Naive thymus-derived CD4-positive, alpha-beta T cell (primary cell): ENCODE measurements at regions of chr19 and their contacts with region 1.

Region 1: GRCh38 chr19:58305065-58305931 is at the start of gene ERVK3-1:
- DNase-seq: peak; percentile 80 to 95 (median 93)
- ATAC-seq: peak; percentile 99
- H3K4me3 ChIP-seq: peak within 1 kb of the TSS; percentile 69
- H3K4me3 Mint-ChIP-seq: peak within 1 kb of the TSS; percentile 94 to 100 (median 98)
- H3K27ac ChIP-seq: peak within 1 kb of the TSS; percentile 91
- H3K27ac Mint-ChIP-seq: peak within 1 kb of the TSS; percentile 98 to 100 (median 99)
- H3K4me1 ChIP-seq: peaks cover 14 to 20% of the 10 kb centered on the region in 2 donors
- H3K4me1 Mint-ChIP-seq: peaks cover 33 to 64% (median 55%) of the 10 kb centered on the region in 7 donors
- H3K27me3 ChIP-seq: no peaks in the 10 kb centered on the region
- H3K27me3 Mint-ChIP-seq: no peaks in the 10 kb centered on the region
- total RNA-seq, gene ERVK3-1: 59.7 to 122 (median 65.4) TPM

Region 2: GRCh38 chr19:57410877-57411671 is 894.2 kb before region 1 on chr19 and contains the start of gene ZNF17:
- CTCF ChIA-PET with region 1: no interaction called
- POLR2A ChIA-PET with region 1: no interaction called
- intact Hi-C with region 1: loop called in 1 of 2 experiments (anchors 1 kb)
- DNase-seq: peak; percentile 72 to 95 (median 88)
- ATAC-seq: peak; percentile 100
- H3K4me3 ChIP-seq: peak within 1 kb of the TSS; percentile 80
- H3K4me3 Mint-ChIP-seq: peak within 1 kb of the TSS; percentile 85 to 97 (median 96)
- H3K27ac ChIP-seq: peak within 1 kb of the TSS; percentile 80
- H3K27ac Mint-ChIP-seq: peak within 1 kb of the TSS; percentile 78 to 96 (median 92)
- H3K4me1 ChIP-seq: peaks cover 3 to 8% of the 10 kb centered on the region in 2 donors
- H3K4me1 Mint-ChIP-seq: peaks cover 20 to 46% (median 34%) of the 10 kb centered on the region in 7 donors
- H3K27me3 ChIP-seq: no peaks in the 10 kb centered on the region
- H3K27me3 Mint-ChIP-seq: no peaks in the 10 kb centered on the region
- total RNA-seq, gene ZNF17: 9.3 to 27.8 (median 17.2) TPM

Region 3: GRCh38 chr19:58278157-58279041 is 26.9 kb before region 1 on chr19 and contains the start of gene ZNF8:
- CTCF ChIA-PET with region 1: no interaction called
- POLR2A ChIA-PET with region 1: interaction called, 21 read pairs
- intact Hi-C with region 1: loop called (anchors 1 kb)
- DNase-seq: peak; percentile 84 to 96 (median 93)
- ATAC-seq: peak; percentile 99
- H3K4me3 ChIP-seq: peak within 1 kb of the TSS; percentile 93
- H3K4me3 Mint-ChIP-seq: peak within 1 kb of the TSS; percentile 89 to 99 (median 95)
- H3K27ac ChIP-seq: peak within 1 kb of the TSS; percentile 80
- H3K27ac Mint-ChIP-seq: peak within 1 kb of the TSS; percentile 88 to 97 (median 96)
- H3K4me1 ChIP-seq: peaks cover 12 to 15% of the 10 kb centered on the region in 2 donors
- H3K4me1 Mint-ChIP-seq: peaks cover 28 to 63% (median 43%) of the 10 kb centered on the region in 7 donors
- H3K27me3 ChIP-seq: no peaks in the 10 kb centered on the region
- H3K27me3 Mint-ChIP-seq: no peaks in the 10 kb centered on the region
- total RNA-seq, gene ZNF8: 5.2 to 10.5 (median 10.0) TPM

Region 4: GRCh38 chr19:58380722-58381466 is 75.6 kb after region 1 on chr19 and contains the start of gene ZNF837:
- CTCF ChIA-PET with region 1: no interaction called
- POLR2A ChIA-PET with region 1: interaction called, 3 read pairs
- intact Hi-C with region 1: loop called (anchors 1 kb)
- DNase-seq: peak; percentile 90 to 100 (median 98)
- ATAC-seq: peak; percentile 93
- H3K4me3 ChIP-seq: peak within 1 kb of the TSS; percentile 97
- H3K4me3 Mint-ChIP-seq: peak within 1 kb of the TSS; percentile 87 to 98 (median 91)
- H3K27ac ChIP-seq: peak within 1 kb of the TSS; percentile 96
- H3K27ac Mint-ChIP-seq: peak within 1 kb of the TSS; percentile 93 to 97 (median 97)
- H3K4me1 ChIP-seq: peaks cover 21 to 25% of the 10 kb centered on the region in 2 donors
- H3K4me1 Mint-ChIP-seq: peaks cover 23 to 40% (median 34%) of the 10 kb centered on the region in 7 donors
- H3K27me3 ChIP-seq: no peaks in the 10 kb centered on the region
- H3K27me3 Mint-ChIP-seq: no peaks in the 10 kb centered on the region
- total RNA-seq, gene ZNF837: 1.4 to 4.3 (median 2.4) TPM

Region 5: DNA sequence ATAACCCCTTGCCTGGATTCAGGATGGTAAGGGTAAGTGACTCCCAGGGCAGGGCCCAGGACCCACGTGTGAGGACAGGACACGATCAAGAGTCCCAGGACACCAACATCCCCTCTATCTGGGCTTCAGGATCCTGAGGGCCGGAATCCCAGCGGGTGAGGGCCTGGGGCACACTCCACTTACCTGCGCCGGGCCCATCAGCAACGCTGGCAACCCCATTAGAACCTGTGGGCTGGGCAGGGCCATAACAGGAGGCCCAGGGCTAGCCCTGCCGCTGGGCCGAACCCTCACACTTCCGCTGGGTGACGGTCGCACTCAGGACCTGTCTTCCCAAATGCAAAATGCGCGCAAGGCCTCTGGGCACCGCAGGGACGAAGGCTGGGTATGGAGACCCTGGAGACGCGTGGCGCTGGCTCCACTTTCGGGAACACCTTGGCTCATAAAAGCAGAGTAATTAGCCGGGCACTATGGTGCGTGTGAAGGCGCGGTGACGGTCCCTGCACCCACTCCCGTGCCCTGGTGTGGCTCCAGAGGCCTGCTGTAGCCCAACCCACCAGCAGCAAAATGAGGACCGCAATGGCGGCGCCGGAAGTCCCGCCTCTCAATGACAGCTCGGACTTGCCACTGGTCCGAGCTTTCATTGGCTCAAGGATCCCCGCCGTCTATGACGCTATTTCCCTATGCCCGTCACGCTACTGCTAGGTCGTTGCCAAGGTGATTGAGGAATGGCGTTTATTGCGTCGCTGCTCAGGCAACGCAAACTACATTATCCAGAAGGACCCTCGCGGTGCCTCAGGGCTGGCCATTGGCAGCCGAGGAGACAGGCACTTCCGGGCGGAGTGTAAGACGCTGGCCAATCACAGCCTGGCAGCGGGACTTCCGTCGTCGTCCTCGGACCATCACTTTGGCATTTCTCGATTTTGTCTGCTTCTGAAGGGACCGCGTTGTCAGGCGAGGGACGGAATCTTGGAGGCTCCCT is 134.6 kb after region 1 on chr19 and contains the start of gene ZNF132:
- CTCF ChIA-PET with region 1: no interaction called
- POLR2A ChIA-PET with region 1: no interaction called
- intact Hi-C with region 1: loop called (anchors 1 kb)
- DNase-seq: peak; percentile 78 to 99 (median 95)
- ATAC-seq: peak; percentile 98
- H3K4me3 ChIP-seq: peak within 1 kb of the TSS; percentile 73
- H3K4me3 Mint-ChIP-seq: peak within 1 kb of the TSS; percentile 86 to 99 (median 96)
- H3K27ac ChIP-seq: peak within 1 kb of the TSS; percentile 81
- H3K27ac Mint-ChIP-seq: peak within 1 kb of the TSS; percentile 87 to 99 (median 97)
- H3K4me1 ChIP-seq: peaks cover 17% of the 10 kb centered on the region in 2 donors
- H3K4me1 Mint-ChIP-seq: peaks cover 21 to 35% (median 27%) of the 10 kb centered on the region in 7 donors
- H3K27me3 ChIP-seq: no peaks in the 10 kb centered on the region
- H3K27me3 Mint-ChIP-seq: no peaks in the 10 kb centered on the region
- total RNA-seq, gene ZNF132: 1.2 to 12.9 (median 4.9) TPM

Region 6: DNA sequence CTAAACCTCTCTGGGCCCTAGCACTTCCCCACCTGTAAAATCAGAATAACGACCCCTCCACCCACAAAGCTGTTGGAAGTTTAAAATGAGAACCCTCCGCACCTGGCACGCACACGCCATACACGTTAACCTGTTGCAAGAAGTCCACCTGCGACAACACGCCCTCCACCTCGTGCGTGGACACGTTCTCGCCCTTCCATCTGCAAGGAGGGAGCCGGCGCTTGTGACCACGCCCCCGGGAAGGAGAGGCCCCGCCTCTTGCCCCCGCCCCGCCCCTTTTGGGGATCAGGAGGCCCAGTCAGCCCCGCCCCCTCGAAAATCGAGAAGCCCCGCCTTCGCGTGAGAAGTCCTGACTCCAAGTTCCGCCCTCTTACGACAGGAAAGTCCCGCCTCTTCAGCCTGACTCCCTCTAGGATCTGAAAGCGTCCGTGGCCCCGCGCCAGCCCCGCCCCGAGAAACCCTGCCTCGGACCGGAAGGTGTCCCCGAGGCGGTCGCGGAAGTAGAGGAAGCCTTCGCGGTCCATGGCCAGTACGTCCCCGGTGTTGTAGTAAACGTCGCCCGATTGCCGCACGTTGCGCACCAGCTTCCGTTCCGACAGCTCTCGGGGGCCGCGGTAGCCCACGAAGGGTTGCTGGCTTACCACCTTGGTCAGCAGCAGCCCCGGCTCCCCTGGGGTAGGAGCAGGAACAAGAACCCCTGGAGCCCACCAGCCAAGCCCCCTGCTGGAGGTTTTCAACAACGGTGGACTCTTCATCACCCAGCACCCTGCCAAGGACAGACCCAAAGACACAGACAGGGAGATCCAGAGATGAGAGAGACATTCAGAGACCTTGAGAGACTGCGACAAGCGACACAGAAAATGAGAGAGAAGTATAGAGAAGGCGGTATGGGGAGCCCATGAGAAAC is 194.0 kb after region 1 on chr19:
- CTCF ChIA-PET with region 1: no interaction called
- POLR2A ChIA-PET with region 1: no interaction called
- intact Hi-C with region 1: loop called in 1 of 2 experiments (anchors 1 kb)
- DNase-seq: peak; percentile 76 to 96 (median 87)
- ATAC-seq: peak; percentile 93
- H3K4me3 ChIP-seq: peak overlapping the region; percentile 66
- H3K4me3 Mint-ChIP-seq: peak overlapping the region; percentile 88 to 98 (median 94)
- H3K27ac ChIP-seq: peak overlapping the region; percentile 72
- H3K27ac Mint-ChIP-seq: peak overlapping the region; percentile 90 to 97 (median 95)
- H3K4me1 ChIP-seq: peaks cover 12 to 15% of the 10 kb centered on the region in 2 donors
- H3K4me1 Mint-ChIP-seq: peaks cover 8 to 32% (median 21%) of the 10 kb centered on the region in 7 donors
- H3K27me3 ChIP-seq: no peaks in the 10 kb centered on the region
- H3K27me3 Mint-ChIP-seq: no peaks in the 10 kb centered on the region